ENCODE measurements at regions of chr6 and their contacts with region 1.

Region 1: GRCh38 chr6:22845467-22845866 is 276.1 kb downstream of the HDGFL1 start:
- DNase-seq: no peak
- ATAC-seq: peak in 1 of 4 donors; percentile 57
- H3K4me3 ChIP-seq: no peak overlapping the region
- H3K27ac ChIP-seq: no peak overlapping the region
- H3K4me1 ChIP-seq: peaks cover 0 to 11% (median 4%) of the 10 kb centered on the region in 12 donors
- H3K27me3 ChIP-seq: no peaks in the 10 kb centered on the region
- CTCF ChIP-seq: no peak
- POLR2A ChIP-seq: no peak

Region 2: DNA sequence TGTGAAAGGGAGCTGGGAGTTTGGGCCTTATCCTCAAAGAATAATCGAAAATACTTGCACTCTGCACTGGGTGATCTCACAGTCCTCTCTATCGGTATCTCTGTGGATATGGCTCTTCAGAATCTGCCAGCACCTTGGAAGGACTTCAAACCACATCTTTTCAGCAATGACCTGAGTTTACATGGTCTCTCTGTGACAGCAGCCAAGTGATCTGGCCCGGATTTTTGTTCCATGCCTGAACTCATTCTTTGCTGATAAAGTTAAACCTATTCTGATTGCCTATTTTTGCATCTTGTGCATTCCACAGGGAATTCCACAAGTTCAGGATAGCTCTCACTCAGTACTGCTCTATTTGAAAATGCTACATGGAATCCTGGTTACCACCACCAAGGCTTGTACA is 177.2 kb before region 1 on chr6:
- intact Hi-C with region 1: no loop called
- DNase-seq: peak in 4 of 5 donors; percentile 40 to 60 (median 48)
- ATAC-seq: peak; percentile 85 to 95 (median 92)
- H3K4me3 ChIP-seq: no peak overlapping the region
- H3K27ac ChIP-seq: peak overlapping the region; percentile 6 to 72 (median 51)
- H3K4me1 ChIP-seq: peaks cover 0 to 61% (median 39%) of the 10 kb centered on the region in 12 donors
- H3K27me3 ChIP-seq: no peaks in the 10 kb centered on the region
- CTCF ChIP-seq: no peak
- POLR2A ChIP-seq: no peak

Region 3: GRCh38 chr6:22892452-22892851 is 47.0 kb after region 1 on chr6:
- intact Hi-C with region 1: loop called in 1 of 10 experiments (anchors 1 kb)
- DNase-seq: no peak
- ATAC-seq: peak; percentile 32 to 85 (median 74)
- H3K4me3 ChIP-seq: no peak overlapping the region
- H3K27ac ChIP-seq: peak overlapping the region in 10 of 12 donors; percentile 29 to 78 (median 50)
- H3K4me1 ChIP-seq: peaks cover 0 to 22% (median 3%) of the 10 kb centered on the region in 12 donors
- H3K27me3 ChIP-seq: no peaks in the 10 kb centered on the region
- CTCF ChIP-seq: no peak
- POLR2A ChIP-seq: no peak

Measured in heart left ventricle (tissue), 16 donors.